Activated CD8-positive, alpha-beta T cell treated with anti-CD3 and anti-CD28 coated beads, Interleukin-2, amount 10 ng/mL, durations not matched to agents 7 days and 5 days (primary cell): ENCODE measurements at regions of chr11 and their contacts with region 1.

Region 1: DNA sequence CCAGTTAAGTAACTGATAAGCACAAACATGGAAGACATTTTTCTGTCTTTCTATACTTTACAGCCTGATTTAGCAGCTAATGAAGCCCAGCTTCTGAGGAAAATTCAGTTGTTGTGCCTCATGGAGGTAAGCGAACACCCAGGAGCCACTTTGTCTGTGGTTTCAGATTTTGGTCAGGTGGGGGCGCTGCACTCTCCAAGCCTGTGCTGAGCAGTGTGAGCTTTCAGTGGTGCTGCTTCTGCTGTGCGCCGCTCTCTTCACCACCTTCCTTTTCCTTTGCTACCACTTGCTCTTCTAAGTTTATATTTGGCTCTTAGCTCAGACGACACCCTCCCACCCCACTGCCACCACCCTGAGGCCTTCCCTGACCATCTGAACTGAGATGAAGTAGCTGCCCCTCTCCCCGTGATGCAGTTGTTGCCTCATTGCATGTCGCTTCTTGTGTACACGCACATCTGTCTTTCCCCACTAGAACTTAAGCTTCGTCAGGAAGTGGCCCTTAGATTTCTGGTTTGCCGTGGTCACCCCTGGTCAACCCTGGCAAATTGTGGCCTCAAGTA is 14.0 kb downstream of the PSMD13 start:
- DNase-seq: peak; percentile 90
- ATAC-seq: peak; percentile 97
- H3K4me3 Mint-ChIP-seq: peak overlapping the region; percentile 29
- H3K27ac Mint-ChIP-seq: peak overlapping the region; percentile 79
- H3K4me1 Mint-ChIP-seq: peaks cover 21% of the 10 kb centered on the region
- H3K27me3 Mint-ChIP-seq: peaks cover 2% of the 10 kb centered on the region

Region 2: DNA sequence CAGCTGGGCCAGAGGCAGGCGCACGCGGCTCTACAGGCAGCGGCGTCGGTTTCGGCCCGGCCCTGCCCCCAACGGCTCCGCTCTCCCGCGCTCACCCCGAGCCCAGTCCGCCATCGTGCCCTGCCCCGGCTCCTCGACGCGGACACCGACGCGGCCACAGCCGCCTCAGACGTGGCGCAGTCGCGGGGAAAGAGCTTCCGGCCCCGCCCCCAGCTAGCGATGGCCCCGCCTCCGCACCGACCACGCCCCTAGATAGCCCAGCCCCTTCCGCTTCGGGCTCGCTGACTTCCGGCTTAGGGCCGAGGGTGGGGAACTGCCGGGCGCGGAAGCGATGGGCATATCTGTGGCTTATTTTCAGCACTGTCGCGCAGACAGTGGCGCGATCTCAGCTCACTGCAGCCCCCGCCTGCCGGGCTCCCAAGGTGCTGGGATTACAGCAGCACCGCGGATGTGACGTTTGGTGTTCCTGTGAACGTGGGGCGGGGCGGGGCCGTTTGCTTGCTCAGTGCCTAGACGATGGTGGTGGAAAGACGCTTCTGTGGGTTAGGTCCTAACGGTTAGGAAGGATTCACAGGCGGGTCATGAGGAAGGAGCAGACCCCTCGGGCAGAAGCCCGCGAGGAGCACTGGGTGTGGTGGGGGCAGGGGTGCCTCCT is 43.5 kb before region 1 on chr11 and contains the starts of genes BET1L and RIC8A:
- CTCF ChIA-PET with region 1: interaction called, 13 read pairs
- POLR2A ChIA-PET with region 1: interaction called, 4 read pairs
- DNase-seq: peak; percentile 98
- ATAC-seq: peak; percentile 78
- H3K4me3 Mint-ChIP-seq: peak within 1 kb of the TSS; percentile 94
- H3K27ac Mint-ChIP-seq: peak within 1 kb of the TSS; percentile 99
- H3K4me1 Mint-ChIP-seq: peaks cover 63% of the 10 kb centered on the region
- H3K27me3 Mint-ChIP-seq: no peaks in the 10 kb centered on the region
- total RNA-seq, gene BET1L: 33.8 to 34.2 TPM
- total RNA-seq, gene RIC8A: 121 to 126 TPM

Region 3: GRCh38 chr11:236774-237767 is 13.7 kb before region 1 on chr11 and contains the start of gene PSMD13:
- CTCF ChIA-PET with region 1: interaction called, 86 read pairs
- POLR2A ChIA-PET with region 1: interaction called, 14 read pairs
- DNase-seq: peak; percentile 92
- ATAC-seq: peak; percentile 87
- H3K4me3 Mint-ChIP-seq: peak within 1 kb of the TSS; percentile 99
- H3K27ac Mint-ChIP-seq: peak within 1 kb of the TSS; percentile 99
- H3K4me1 Mint-ChIP-seq: peaks cover 48% of the 10 kb centered on the region
- H3K27me3 Mint-ChIP-seq: no peaks in the 10 kb centered on the region
- total RNA-seq, gene PSMD13: 164 to 173 TPM

Region 4: DNA sequence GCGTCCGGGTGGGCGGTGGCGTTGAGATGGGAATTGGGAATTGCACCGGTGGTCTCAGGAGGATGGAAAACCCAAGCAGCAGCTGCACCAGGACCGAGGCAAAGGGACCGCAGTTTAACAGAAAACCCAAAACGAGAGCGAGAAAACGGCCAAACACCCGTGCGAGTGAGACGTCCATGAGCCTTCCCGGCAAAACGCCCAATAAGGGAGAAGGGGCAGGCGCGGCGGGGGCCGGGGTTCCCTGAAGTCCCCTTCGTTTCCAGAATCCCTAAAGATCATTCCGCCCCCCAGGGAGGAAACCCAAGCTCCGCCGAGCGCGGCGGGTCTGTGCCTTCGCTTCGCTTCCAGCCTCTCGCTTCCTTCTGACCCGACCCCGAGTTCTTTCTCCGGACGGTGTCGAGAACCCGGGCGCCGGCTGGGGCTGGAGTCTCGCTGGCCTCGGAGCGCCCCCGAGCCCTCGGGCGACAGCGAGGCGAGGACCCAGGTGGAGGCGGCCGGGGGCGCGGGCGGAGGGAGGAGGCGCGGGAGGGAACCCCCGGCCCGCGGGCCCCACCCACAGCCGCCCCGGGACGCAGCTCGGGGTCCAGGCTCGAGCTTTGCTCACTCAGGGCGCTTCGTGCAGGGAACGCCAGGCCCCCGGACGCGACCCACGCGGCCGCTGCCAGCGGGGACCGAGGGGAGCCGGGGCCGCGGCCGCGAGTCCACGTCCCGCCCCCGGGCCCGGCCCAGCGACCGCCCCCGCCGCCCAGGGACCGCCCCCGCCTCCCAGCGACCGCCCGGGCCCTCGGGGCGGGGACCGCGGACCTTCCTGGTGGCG is 37.7 kb after region 1 on chr11 and contains the start of gene PGGHG:
- CTCF ChIA-PET with region 1: interaction called, 76 read pairs
- POLR2A ChIA-PET with region 1: interaction called, 36 read pairs
- DNase-seq: peak; percentile 80
- ATAC-seq: peak; percentile 51
- H3K4me3 Mint-ChIP-seq: peak within 1 kb of the TSS; percentile 94
- H3K27ac Mint-ChIP-seq: peak within 1 kb of the TSS; percentile 97
- H3K4me1 Mint-ChIP-seq: peaks cover 61% of the 10 kb centered on the region
- H3K27me3 Mint-ChIP-seq: peaks cover 2% of the 10 kb centered on the region
- total RNA-seq, gene PGGHG: 487 to 541 TPM

Region 5: GRCh38 chr11:304915-305843 is 54.4 kb after region 1 on chr11:
- CTCF ChIA-PET with region 1: interaction called, 47 read pairs
- POLR2A ChIA-PET with region 1: interaction called, 8 read pairs
- DNase-seq: peak; percentile 82
- ATAC-seq: no peak
- H3K4me3 Mint-ChIP-seq: peak overlapping the region; percentile 6
- H3K27ac Mint-ChIP-seq: peak overlapping the region; percentile 11
- H3K4me1 Mint-ChIP-seq: peaks cover 63% of the 10 kb centered on the region
- H3K27me3 Mint-ChIP-seq: peaks cover 9% of the 10 kb centered on the region

Region 6: GRCh38 chr11:363948-364761 is 113.3 kb after region 1 on chr11:
- CTCF ChIA-PET with region 1: interaction called, 32 read pairs
- POLR2A ChIA-PET with region 1: interaction called, 5 read pairs
- DNase-seq: peak; percentile 65
- ATAC-seq: peak; percentile 76
- H3K4me3 Mint-ChIP-seq: no peak overlapping the region
- H3K27ac Mint-ChIP-seq: no peak overlapping the region
- H3K4me1 Mint-ChIP-seq: peaks cover 23% of the 10 kb centered on the region
- H3K27me3 Mint-ChIP-seq: peaks cover 31% of the 10 kb centered on the region

Region 7: DNA sequence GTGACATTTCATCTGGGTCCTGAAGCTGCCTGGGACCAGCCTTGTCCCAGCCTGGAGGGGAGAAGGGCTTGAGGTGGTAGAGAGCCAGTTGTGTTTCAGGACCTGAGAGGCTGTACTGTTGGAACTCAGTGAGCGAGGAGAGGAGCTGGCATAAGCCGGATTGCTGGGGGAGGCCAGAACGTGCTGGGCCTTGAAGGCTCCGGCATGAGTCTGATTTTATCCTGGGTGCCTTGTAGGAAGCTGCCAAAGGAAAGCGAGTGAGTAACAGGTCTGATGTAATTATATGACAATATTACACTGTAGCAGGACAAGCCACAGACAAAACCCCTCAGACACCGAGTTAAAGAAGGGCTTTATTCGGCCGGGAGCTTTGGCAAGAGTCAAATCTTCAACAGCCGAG is 692.0 kb after region 1 on chr11:
- CTCF ChIA-PET with region 1: no interaction called
- POLR2A ChIA-PET with region 1: no interaction called
- DNase-seq: no peak
- ATAC-seq: no peak
- H3K4me3 Mint-ChIP-seq: no peak overlapping the region
- H3K27ac Mint-ChIP-seq: peak overlapping the region; percentile 10
- H3K4me1 Mint-ChIP-seq: peaks cover 18% of the 10 kb centered on the region
- H3K27me3 Mint-ChIP-seq: no peaks in the 10 kb centered on the region